ENCODE measurements at regions of chr19 and their contacts with region 1.

Region 1: GRCh38 chr19:732148-733069 is 18.5 kb upstream of the MISP start:
- DNase-seq: no peak

Region 2: GRCh38 chr19:680287-681028 is 52.0 kb before region 1 on chr19:
- intact Hi-C with region 1: loop called (anchors 5 kb)
- DNase-seq: peak; percentile 94 to 100 (median 99)

Measured in head of caudate nucleus (tissue), 42 donors.